ENCODE measurements at regions of chr12 and their contacts with region 1.

Region 1: DNA sequence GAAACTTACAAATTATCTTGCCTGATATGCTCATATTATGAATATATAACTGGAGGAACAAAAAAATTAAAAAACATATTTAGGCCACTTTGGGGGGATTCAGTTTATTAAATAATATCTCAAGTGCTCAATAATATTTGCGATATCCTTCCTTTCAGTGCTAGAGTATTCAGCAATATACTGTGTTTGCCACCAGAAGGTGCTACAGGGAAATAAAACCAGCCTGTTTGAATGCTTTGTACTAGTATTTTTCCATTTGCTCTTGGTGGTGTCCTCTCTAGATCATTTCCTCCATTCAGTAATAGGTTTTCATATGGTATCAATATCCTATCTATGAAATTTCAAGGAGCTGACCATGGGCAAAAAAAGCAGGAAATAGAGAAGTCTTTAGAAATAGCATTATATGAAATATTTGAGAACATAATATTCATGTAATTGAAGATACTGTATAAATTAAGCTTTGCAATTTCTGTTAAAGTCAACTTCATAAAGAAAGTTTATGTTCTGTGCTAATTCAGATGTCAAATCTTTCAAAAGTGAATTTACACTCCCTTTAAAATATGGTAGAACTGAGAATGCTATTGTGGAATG is 106.2 kb upstream of the NAV3 start:
- DNase-seq: peak in 1 of 5 donors; percentile 6
- ATAC-seq: peak in 3 of 4 donors; percentile 76 to 85 (median 82)
- H3K4me3 ChIP-seq: no peak overlapping the region
- H3K27ac ChIP-seq: no peak overlapping the region
- H3K4me1 ChIP-seq: peaks cover 0 to 5% (median 0%) of the 10 kb centered on the region in 12 donors
- H3K27me3 ChIP-seq: no peaks in the 10 kb centered on the region
- CTCF ChIP-seq: peak; percentile 46 to 87 (median 74)
- POLR2A ChIP-seq: no peak

Region 2: DNA sequence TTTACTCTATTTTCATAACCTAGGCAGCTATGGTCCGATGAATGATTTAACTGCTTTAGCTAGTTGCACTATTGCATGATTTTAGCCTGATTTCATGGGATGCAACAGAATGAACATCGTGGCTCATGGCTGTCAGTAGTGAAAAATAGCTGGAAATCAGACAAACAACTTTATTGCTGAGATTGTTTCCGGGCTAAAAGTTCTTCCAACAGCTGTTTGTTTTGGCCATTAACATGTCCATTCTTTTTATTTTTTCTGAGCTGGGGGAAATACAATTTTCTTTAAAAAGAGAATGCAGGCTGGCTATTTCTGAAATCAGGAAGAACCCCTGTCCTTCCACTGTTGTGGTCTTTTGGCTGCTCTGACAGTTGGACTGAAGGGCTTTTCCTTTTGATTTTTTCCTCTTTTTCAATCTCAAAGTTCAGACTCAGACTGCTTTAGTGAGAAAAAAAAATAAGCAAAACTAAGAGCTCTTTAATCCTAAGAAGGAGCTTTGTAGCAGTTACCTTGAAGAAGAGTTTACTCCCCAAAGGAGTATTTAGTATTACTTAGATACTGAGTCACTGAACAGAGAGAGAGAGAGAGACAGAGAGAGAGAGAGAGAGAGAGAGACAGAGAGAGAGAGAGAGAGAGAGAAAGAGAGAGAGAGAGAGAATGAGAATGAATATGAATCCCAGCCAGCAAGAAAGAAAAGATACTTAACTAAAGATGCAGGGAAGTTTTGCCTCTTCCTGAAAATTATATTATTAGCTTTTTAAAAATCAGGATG is 106.3 kb after region 1 on chr12 and contains the start of gene NAV3:
- intact Hi-C with region 1: loop called in 1 of 10 experiments (anchors 10 kb)
- DNase-seq: no peak
- ATAC-seq: peak in 2 of 4 donors; percentile 43 to 63
- H3K4me3 ChIP-seq: peak within 1 kb of the TSS in 8 of 12 donors; percentile 9 to 49 (median 32)
- H3K27ac ChIP-seq: peak within 1 kb of the TSS in 11 of 12 donors; percentile 12 to 67 (median 52)
- H3K4me1 ChIP-seq: peaks cover 0 to 34% (median 1%) of the 10 kb centered on the region in 12 donors
- H3K27me3 ChIP-seq: no peaks in the 10 kb centered on the region
- CTCF ChIP-seq: no peak
- POLR2A ChIP-seq: no peak
- total RNA-seq, gene NAV3: 1.8 to 18.0 (median 6.2) TPM

Region 3: GRCh38 chr12:77919450-77919849 is 195.0 kb after region 1 on chr12:
- intact Hi-C with region 1: loop called in 7 of 10 experiments (anchors 2 kb)
- DNase-seq: no peak
- ATAC-seq: no peak
- H3K4me3 ChIP-seq: no peak overlapping the region
- H3K27ac ChIP-seq: no peak overlapping the region
- H3K4me1 ChIP-seq: peaks cover 0 to 4% (median 0%) of the 10 kb centered on the region in 12 donors
- H3K27me3 ChIP-seq: no peaks in the 10 kb centered on the region
- CTCF ChIP-seq: no peak
- POLR2A ChIP-seq: no peak

Region 4: GRCh38 chr12:77925536-77926108 is 201.2 kb after region 1 on chr12:
- intact Hi-C with region 1: loop called (anchors 1 to 2 kb)
- DNase-seq: peak; percentile 62 to 78 (median 73)
- ATAC-seq: peak; percentile 85 to 98 (median 92)
- H3K4me3 ChIP-seq: peak overlapping the region in 5 of 12 donors; percentile 2 to 27 (median 13)
- H3K27ac ChIP-seq: no peak overlapping the region
- H3K4me1 ChIP-seq: peaks cover 0 to 8% (median 0%) of the 10 kb centered on the region in 12 donors
- H3K27me3 ChIP-seq: no peaks in the 10 kb centered on the region
- CTCF ChIP-seq: peak; percentile 80 to 98 (median 94)
- POLR2A ChIP-seq: no peak